H1 (cell line): ENCODE measurements at regions of chr20 and their contacts with region 1.

Region 1: GRCh38 chr20:51335329-51335841 is 207.1 kb downstream of the NFATC2 start:
- DNase-seq: no peak
- H3K4me3 ChIP-seq: no peak overlapping the region
- H3K27ac ChIP-seq: no peak overlapping the region
- H3K4me1 ChIP-seq: no peaks in the 10 kb centered on the region
- H3K27me3 ChIP-seq: no peaks in the 10 kb centered on the region
- CTCF ChIP-seq: no peak
- EP300 ChIP-seq: no peak
- POLR2A ChIP-seq: no peak
- RAD21 ChIP-seq: no peak

Region 2: GRCh38 chr20:51318058-51318895 is 17.1 kb before region 1 on chr20:
- CTCF ChIA-PET with region 1: interaction called, 20 read pairs
- POLR2A ChIA-PET with region 1: no interaction called
- DNase-seq: peak; percentile 43 to 98
- H3K4me3 ChIP-seq: no peak overlapping the region
- H3K27ac ChIP-seq: no peak overlapping the region
- H3K4me1 ChIP-seq: peaks cover 0 to 21% (median 8%) of the 10 kb centered on the region in 4 experiments; a peak in 6 of 7 replicates
- H3K27me3 ChIP-seq: peaks cover 0 to 9% (median 6%) of the 10 kb centered on the region in 4 experiments; a peak in 5 of 7 replicates
- CTCF ChIP-seq: peak; percentile 86 to 94 (median 93)
- EP300 ChIP-seq: no peak
- POLR2A ChIP-seq: no peak
- RAD21 ChIP-seq: peak; percentile 63 to 75